CD4-positive, alpha-beta memory T cell (primary cell): ENCODE measurements at regions of chr2 and their contacts with region 1.

Region 1: GRCh38 chr2:197113275-197113711 is 186.8 kb upstream of the PGAP1 start:
- DNase-seq: peak in 4 of 5 donors; percentile 38 to 49 (median 44)
- H3K4me3 ChIP-seq: no peak overlapping the region
- H3K4me3 Mint-ChIP-seq: no peak overlapping the region
- H3K27ac ChIP-seq: no peak overlapping the region
- H3K27ac Mint-ChIP-seq: peak overlapping the region; percentile 30 to 91 (median 75)
- H3K4me1 ChIP-seq: peaks cover 4% of the 10 kb centered on the region
- H3K4me1 Mint-ChIP-seq: peaks cover 16 to 31% (median 24%) of the 10 kb centered on the region in 4 donors
- H3K27me3 ChIP-seq: no peaks in the 10 kb centered on the region
- H3K27me3 Mint-ChIP-seq: no peaks in the 10 kb centered on the region

Region 2: DNA sequence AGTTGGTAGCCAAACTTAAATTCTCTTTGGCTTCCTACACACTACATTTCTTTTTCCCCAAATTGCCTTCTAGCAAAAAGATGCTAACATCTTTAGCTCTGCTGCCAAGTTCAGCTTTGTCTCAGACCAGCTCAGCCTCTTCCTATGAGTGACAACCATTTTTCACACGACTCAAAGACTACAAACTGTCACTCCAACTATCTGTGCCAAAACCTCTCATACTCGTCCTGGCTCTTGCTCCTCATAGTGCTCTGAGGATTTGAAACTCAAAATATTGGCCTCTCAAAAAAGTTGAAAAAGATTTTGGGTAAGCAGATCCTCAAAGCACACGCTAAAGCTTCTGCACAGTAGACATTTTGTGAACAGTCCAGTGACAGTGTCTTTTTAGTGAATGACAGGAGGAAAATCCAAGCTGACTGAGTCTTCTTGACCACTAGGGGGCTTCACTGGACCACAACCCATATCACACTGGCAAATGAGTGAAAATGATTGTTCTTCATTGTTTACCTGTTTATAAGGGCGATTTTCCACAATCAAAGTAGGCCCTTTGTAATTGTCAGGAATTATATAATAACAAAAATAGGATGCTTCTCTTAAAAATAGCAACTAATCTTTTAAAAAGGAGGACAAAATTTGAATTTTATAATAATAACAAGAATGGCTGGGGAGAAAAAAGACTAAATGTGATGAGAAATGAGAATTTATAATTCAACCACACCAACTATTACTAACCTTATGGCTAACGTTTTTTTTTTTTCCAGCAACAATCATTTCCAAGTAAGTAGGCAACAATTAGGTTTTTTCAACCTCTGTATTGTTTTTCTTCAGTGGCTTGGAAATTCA is 101.3 kb before region 1 on chr2:
- CTCF ChIA-PET with region 1: interaction called, 15 read pairs
- POLR2A ChIA-PET with region 1: no interaction called
- intact Hi-C with region 1: no loop called
- DNase-seq: peak in 4 of 5 donors; percentile 28 to 43 (median 37)
- H3K4me3 ChIP-seq: no peak overlapping the region
- H3K4me3 Mint-ChIP-seq: no peak overlapping the region
- H3K27ac ChIP-seq: no peak overlapping the region
- H3K27ac Mint-ChIP-seq: peak overlapping the region; percentile 50 to 80 (median 68)
- H3K4me1 ChIP-seq: no peaks in the 10 kb centered on the region
- H3K4me1 Mint-ChIP-seq: peaks cover 3 to 10% (median 9%) of the 10 kb centered on the region in 4 donors
- H3K27me3 ChIP-seq: no peaks in the 10 kb centered on the region
- H3K27me3 Mint-ChIP-seq: no peaks in the 10 kb centered on the region

Region 3: GRCh38 chr2:197130318-197130717 is 17.0 kb after region 1 on chr2:
- CTCF ChIA-PET with region 1: interaction called, 52 read pairs
- POLR2A ChIA-PET with region 1: interaction called, 5 read pairs
- intact Hi-C with region 1: loop called (anchors 2 kb)
- DNase-seq: peak; percentile 30 to 52 (median 41)
- H3K4me3 ChIP-seq: no peak overlapping the region
- H3K4me3 Mint-ChIP-seq: peak overlapping the region in 6 of 8 donors; percentile 22 to 64 (median 32)
- H3K27ac ChIP-seq: no peak overlapping the region
- H3K27ac Mint-ChIP-seq: peak overlapping the region; percentile 8 to 86 (median 85)
- H3K4me1 ChIP-seq: peaks cover 75% of the 10 kb centered on the region
- H3K4me1 Mint-ChIP-seq: peaks cover 57 to 84% (median 67%) of the 10 kb centered on the region in 4 donors
- H3K27me3 ChIP-seq: no peaks in the 10 kb centered on the region
- H3K27me3 Mint-ChIP-seq: no peaks in the 10 kb centered on the region

Region 4: DNA sequence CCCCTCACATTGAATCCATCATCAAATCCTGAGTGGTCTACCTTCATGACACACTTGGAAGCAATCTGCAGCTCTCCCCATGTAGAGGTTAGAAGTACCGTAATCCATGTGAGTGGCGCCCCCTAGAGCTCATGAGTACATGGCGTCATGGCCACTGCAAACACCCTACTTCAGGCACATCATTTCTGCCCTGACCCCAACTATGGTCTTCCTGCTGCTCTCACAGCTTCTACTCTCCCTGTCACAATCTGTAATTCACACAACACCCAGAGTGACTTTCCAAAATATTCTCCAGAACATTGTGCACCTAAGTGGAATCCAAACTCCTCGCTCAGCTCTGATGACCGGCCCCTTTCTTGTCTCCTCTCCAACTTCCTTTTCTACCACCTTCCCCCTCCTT is 55.4 kb after region 1 on chr2:
- CTCF ChIA-PET with region 1: interaction called, 168 read pairs
- POLR2A ChIA-PET with region 1: interaction called, 6 read pairs
- intact Hi-C with region 1: loop called (anchors 1 kb)
- DNase-seq: peak; percentile 45 to 73 (median 50)
- H3K4me3 ChIP-seq: no peak overlapping the region
- H3K4me3 Mint-ChIP-seq: peak overlapping the region in 4 of 8 donors; percentile 4 to 41 (median 28)
- H3K27ac ChIP-seq: peak overlapping the region; percentile 7
- H3K27ac Mint-ChIP-seq: peak overlapping the region; percentile 53 to 91 (median 81)
- H3K4me1 ChIP-seq: peaks cover 87% of the 10 kb centered on the region
- H3K4me1 Mint-ChIP-seq: peaks cover 52 to 84% (median 65%) of the 10 kb centered on the region in 4 donors
- H3K27me3 ChIP-seq: no peaks in the 10 kb centered on the region
- H3K27me3 Mint-ChIP-seq: no peaks in the 10 kb centered on the region

Region 5: DNA sequence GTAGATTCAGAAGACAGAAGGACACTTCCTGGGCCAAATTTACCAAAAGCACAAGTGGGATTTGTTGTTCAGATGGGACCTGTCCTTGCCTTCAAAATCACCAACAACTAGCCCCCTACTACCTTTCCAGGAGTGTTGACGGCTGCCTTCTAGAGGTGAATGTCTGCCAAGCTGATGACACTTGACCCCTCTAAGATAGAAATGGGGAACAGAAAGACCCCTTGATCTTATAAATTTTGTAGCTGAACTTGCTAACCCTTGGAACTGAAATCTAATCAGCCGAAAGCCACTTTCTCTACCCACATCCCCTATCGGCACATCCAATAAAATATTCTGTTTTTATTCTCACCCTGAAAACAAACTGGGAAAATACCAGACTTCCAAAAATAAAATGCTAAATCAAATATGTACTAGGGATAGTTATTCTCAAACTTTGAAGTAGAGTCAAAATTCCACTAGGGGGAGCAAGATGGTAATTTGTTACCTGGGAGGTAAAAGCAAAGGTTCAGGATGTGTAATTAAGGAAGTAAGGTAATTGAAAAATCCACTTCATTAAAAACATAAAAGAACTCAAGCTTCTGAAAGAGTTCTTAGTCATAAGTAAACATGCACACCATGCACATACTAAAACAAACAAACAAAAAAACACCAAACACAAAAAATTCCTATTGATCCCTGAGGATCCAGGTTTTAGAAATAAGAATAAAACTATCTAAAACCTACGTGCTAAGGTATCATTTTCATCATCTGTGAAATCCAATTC is 78.1 kb after region 1 on chr2:
- CTCF ChIA-PET with region 1: interaction called, 48 read pairs
- POLR2A ChIA-PET with region 1: interaction called, 7 read pairs
- intact Hi-C with region 1: loop called (anchors 1 kb)
- DNase-seq: peak in 4 of 5 donors; percentile 69 to 75 (median 74)
- H3K4me3 ChIP-seq: no peak overlapping the region
- H3K4me3 Mint-ChIP-seq: peak overlapping the region in 7 of 8 donors; percentile 27 to 73 (median 60)
- H3K27ac ChIP-seq: peak overlapping the region; percentile 77
- H3K27ac Mint-ChIP-seq: peak overlapping the region; percentile 64 to 93 (median 89)
- H3K4me1 ChIP-seq: peaks cover 90% of the 10 kb centered on the region
- H3K4me1 Mint-ChIP-seq: peaks cover 64 to 85% (median 73%) of the 10 kb centered on the region in 4 donors
- H3K27me3 ChIP-seq: no peaks in the 10 kb centered on the region
- H3K27me3 Mint-ChIP-seq: no peaks in the 10 kb centered on the region

Region 6: DNA sequence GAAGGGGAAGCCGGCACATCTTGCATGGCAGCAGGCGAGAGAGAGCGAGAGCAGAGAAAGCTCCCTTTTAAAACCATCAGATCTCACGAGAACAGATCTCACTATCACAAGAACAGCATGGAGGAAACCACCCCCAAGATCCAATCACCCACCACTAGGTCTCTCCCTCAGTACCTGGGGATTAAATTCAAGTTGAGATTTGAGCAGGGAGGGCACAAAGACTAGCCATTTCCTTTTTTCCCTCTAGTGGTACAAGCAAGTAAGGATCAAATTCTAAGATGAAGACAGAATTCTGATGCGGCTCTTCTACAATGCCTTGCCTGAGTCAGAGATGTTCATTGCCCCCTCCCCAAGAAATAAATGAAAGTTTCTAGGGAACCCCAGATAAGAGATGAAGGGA is 242.8 kb after region 1 on chr2:
- CTCF ChIA-PET with region 1: interaction called, 15 read pairs
- POLR2A ChIA-PET with region 1: no interaction called
- intact Hi-C with region 1: loop called (anchors 1 kb)
- DNase-seq: peak in 4 of 5 donors; percentile 7 to 28 (median 21)
- H3K4me3 ChIP-seq: no peak overlapping the region
- H3K4me3 Mint-ChIP-seq: peak overlapping the region in 6 of 8 donors; percentile 33 to 77 (median 48)
- H3K27ac ChIP-seq: no peak overlapping the region
- H3K27ac Mint-ChIP-seq: peak overlapping the region in 2 of 7 donors; percentile 40 to 66
- H3K4me1 ChIP-seq: peaks cover 12% of the 10 kb centered on the region
- H3K4me1 Mint-ChIP-seq: peaks cover 12 to 21% (median 16%) of the 10 kb centered on the region in 4 donors
- H3K27me3 ChIP-seq: no peaks in the 10 kb centered on the region
- H3K27me3 Mint-ChIP-seq: no peaks in the 10 kb centered on the region